H1 (cell line): ENCODE measurements at regions of chr7 and their contacts with region 1.

Region 1: GRCh38 chr7:105990726-105991453 is 27.8 kb downstream of the CDHR3 start:
- DNase-seq: peak; percentile 68 to 72
- H3K4me3 ChIP-seq: no peak overlapping the region
- H3K27ac ChIP-seq: no peak overlapping the region; the same call in 1 of the 2 replicates
- H3K4me1 ChIP-seq: peaks cover 11 to 34% (median 28%) of the 10 kb centered on the region in 4 experiments; a peak in 6 of 7 replicates
- H3K27me3 ChIP-seq: no peaks in the 10 kb centered on the region
- CTCF ChIP-seq: peak; percentile 37 to 76 (median 73)
- EP300 ChIP-seq: 0 out of 3 replicates have a peak, but pooled peaks of 1 of the 2 experiments have one; percentile 16
- POLR2A ChIP-seq: no peak
- RAD21 ChIP-seq: peak; percentile 40 to 49

Region 2: GRCh38 chr7:105413887-105414437 is 576.9 kb before region 1 on chr7:
- CTCF ChIA-PET with region 1: no interaction called
- POLR2A ChIA-PET with region 1: no interaction called
- DNase-seq: no peak
- H3K4me3 ChIP-seq: no peak overlapping the region
- H3K27ac ChIP-seq: no peak overlapping the region
- H3K4me1 ChIP-seq: no peaks in the 10 kb centered on the region
- H3K27me3 ChIP-seq: no peaks in the 10 kb centered on the region
- CTCF ChIP-seq: no peak
- EP300 ChIP-seq: no peak
- POLR2A ChIP-seq: no peak
- RAD21 ChIP-seq: no peak

Region 3: GRCh38 chr7:105978035-105978434 is 12.9 kb before region 1 on chr7:
- CTCF ChIA-PET with region 1: interaction called, 17 read pairs
- POLR2A ChIA-PET with region 1: interaction called, 3 read pairs
- DNase-seq: no peak
- H3K4me3 ChIP-seq: no peak overlapping the region
- H3K27ac ChIP-seq: no peak overlapping the region
- H3K4me1 ChIP-seq: peaks cover 4 to 14% (median 10%) of the 10 kb centered on the region in 4 experiments
- H3K27me3 ChIP-seq: no peaks in the 10 kb centered on the region
- CTCF ChIP-seq: no peak
- EP300 ChIP-seq: no peak
- POLR2A ChIP-seq: no peak
- RAD21 ChIP-seq: no peak

Region 4: DNA sequence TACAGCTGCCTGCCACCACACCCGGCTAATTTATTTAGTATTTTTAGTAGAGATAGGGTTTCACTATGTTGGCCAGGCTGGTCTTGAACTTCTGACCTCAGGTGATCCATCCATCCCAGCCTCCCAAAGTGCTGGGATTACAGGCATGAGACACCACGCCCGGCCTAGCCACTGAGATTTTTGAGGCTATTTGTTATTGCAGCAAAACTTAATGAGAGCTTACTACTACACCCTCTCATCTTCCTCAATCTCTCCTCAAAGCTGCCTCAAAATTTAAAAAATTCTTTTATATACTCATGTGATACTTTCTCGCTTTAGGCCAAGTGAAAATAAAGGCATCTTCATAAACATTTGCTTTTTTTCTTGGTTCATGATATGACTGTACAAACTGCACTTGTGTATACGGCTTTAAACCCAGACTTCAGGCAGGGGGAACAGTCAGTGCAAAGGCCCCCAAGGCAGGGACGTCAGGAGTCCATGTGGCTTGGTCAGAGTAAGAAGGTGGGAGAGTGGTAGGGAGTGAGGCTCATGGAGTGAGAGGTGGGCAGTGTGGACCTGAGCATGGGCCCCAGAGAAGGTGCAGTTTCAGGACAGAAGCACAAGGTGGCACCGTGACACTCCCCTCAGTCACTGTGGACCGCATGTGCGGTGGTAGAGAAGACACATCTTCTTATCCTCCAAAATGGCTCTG is 65.8 kb after region 1 on chr7:
- CTCF ChIA-PET with region 1: no interaction called
- POLR2A ChIA-PET with region 1: no interaction called
- DNase-seq: peak in 1 of 2 experiments; percentile 71
- H3K4me3 ChIP-seq: no peak overlapping the region
- H3K27ac ChIP-seq: no peak overlapping the region
- H3K4me1 ChIP-seq: peaks cover 0 to 5% (median 2%) of the 10 kb centered on the region in 4 experiments; a peak in 3 of 7 replicates
- H3K27me3 ChIP-seq: no peaks in the 10 kb centered on the region
- CTCF ChIP-seq: peak; percentile 83 to 95 (median 91)
- EP300 ChIP-seq: no peak
- POLR2A ChIP-seq: no peak
- RAD21 ChIP-seq: peak; percentile 88 to 92

Region 5: DNA sequence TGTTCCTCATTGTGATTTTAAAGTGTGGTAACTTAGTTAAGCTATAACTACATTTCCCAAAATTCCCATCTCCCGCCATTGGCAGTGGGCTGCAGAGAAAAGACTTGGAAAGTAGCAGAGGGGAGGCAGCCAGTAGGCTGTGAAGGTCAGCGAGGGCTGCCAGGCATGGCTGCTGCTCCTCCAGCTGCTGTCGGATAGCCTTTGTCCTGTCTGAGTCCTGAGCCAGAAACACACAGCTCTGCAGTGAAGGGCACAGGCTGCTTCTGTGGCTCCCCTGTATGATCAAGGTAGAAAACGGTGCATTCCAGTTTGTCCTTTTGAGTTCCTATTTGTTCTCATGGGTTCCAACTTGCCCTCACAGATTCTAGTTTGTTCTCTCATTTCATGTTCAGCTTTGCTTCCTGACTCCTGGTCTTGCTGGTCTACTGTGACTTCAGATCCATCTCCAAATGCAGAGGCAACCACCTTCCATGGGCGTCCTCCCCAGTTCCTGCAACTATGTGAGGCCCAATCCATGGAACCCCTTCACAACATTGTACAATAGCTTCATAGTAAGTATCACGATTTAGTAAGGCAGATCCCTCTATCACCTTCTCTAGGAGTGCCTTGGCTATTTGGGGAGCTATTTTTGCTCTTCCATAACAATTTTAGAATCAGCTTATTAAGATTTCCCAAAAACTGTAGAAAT is 89.6 kb after region 1 on chr7:
- CTCF ChIA-PET with region 1: no interaction called
- POLR2A ChIA-PET with region 1: no interaction called
- DNase-seq: no peak
- H3K4me3 ChIP-seq: no peak overlapping the region
- H3K27ac ChIP-seq: no peak overlapping the region
- H3K4me1 ChIP-seq: no peaks in the 10 kb centered on the region
- H3K27me3 ChIP-seq: no peaks in the 10 kb centered on the region
- CTCF ChIP-seq: no peak
- EP300 ChIP-seq: no peak
- POLR2A ChIP-seq: no peak
- RAD21 ChIP-seq: no peak

Region 6: DNA sequence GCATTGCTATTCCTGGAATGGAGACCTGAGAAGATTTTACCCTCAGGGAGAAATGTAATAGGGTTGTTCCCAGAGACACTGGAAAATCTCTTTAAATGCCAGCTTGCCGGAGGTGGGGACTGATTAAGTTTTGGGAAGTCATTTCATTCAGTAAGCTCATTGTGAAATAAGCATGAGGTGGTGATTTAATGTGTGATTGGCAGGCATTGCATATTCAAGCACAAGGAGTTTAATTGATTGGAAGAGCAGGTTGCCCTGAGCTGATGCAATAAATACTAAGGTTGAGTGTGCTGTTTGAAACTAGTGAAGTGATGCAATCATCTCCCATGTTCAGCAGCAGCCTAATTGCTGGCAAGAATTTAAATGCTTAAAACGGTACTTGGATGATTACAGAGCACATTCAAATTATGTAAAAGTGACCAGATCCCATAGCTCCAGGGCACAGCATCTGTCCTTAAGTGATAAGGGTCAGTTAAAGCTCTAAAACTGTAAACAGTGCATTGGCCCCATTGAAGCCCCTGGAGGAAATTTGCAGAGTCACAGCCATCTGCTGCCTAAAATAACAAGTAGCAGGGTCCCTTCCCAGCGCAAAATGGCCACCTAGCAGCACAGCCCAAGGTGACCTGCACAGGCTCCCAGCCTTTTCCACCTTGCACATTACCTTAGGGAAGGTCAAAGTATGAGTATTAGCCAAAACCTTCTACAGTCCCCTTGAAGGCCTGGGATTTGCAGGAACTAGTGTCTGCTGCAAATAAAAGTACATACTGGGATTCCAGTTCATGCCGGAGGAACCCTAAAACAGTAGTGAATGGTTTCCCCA is 578.0 kb after region 1 on chr7:
- CTCF ChIA-PET with region 1: no interaction called
- POLR2A ChIA-PET with region 1: no interaction called
- DNase-seq: no peak
- H3K4me3 ChIP-seq: no peak overlapping the region
- H3K27ac ChIP-seq: peak overlapping the region; percentile 8; the same call in 1 of the 2 replicates
- H3K4me1 ChIP-seq: peaks cover 0 to 3% (median 0%) of the 10 kb centered on the region in 4 experiments; a peak in 1 of 7 replicates
- H3K27me3 ChIP-seq: no peaks in the 10 kb centered on the region
- CTCF ChIP-seq: no peak
- EP300 ChIP-seq: no peak
- POLR2A ChIP-seq: no peak
- RAD21 ChIP-seq: no peak